Pancreas (tissue), 10 donors: ENCODE measurements at regions of chr18 and their contacts with region 1.

Region 1: DNA sequence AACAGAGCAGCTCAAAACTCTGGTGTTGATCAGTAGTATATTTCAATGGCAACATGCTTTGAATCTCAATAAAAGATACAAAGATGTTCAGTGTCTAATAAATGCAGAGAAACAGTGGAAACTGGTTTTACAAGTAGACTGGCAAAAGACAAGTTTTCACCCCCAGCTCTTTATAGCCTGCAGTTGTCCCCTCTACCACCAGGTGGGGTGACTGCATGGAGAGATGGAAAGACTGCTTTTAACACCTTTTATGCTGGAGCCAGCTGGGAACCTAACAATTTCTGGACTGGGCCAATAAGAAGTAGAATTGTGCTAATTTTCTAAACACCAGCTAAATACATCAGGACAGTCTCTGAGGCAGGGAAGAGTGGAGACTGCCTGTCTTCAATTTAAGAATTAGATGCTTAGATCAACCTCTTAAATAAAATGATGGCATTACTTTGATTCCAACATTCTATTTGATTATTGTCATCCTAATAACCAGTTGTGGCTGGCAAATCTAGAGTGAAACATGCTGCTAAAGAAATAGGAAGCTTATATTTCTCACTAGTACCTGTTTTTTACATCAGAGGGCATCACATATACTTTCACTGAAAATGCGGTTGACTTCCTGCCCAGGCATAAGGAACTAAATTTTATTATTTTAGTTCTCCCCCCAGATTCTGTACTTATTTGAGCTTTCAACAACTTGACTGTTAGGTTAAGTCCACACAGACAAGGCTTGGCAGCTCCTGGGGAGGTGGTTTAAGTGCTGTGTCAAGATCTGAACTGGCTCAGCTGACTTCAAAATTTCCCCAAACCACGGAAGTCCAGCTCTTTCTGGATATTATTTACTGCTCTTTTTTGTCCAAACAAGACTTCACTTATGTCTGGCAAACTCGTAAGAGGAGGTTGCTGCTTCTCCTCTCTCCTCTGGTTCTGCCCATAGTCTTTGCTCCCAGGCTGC is 140.5 kb downstream of the TPGS2 start:
- DNase-seq: peak in 5 of 6 donors; percentile 30 to 74 (median 59)
- ATAC-seq: peak; percentile 56 to 94 (median 90)
- H3K4me3 ChIP-seq: no peak overlapping the region
- H3K27ac ChIP-seq: no peak overlapping the region
- H3K4me1 ChIP-seq: no peaks in the 10 kb centered on the region
- H3K27me3 ChIP-seq: no peaks in the 10 kb centered on the region
- CTCF ChIP-seq: peak; percentile 65 to 85 (median 78)

Region 2: DNA sequence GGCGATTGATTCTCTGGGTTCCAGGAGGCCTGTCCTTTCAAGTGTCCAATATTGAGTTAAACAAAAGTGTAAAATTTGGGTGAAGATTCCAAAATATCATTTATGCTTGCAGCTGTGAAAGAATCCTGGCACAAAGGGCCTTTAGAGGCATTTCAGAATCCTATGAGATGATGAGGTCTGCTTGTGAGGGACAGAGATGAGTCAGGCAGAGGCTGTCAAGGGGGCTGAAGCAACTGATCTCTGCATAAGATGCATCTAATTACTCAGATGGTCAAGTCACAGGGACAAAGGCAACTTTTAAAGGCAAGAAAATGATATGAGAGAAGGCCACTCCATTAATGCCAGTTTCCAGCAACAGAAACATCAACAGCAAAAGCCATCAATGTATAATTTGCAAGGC is 311.9 kb before region 1 on chr18:
- intact Hi-C with region 1: no loop called
- DNase-seq: no peak
- ATAC-seq: no peak
- H3K4me3 ChIP-seq: no peak overlapping the region
- H3K27ac ChIP-seq: no peak overlapping the region
- H3K4me1 ChIP-seq: no peaks in the 10 kb centered on the region
- H3K27me3 ChIP-seq: no peaks in the 10 kb centered on the region
- CTCF ChIP-seq: no peak

Region 3: DNA sequence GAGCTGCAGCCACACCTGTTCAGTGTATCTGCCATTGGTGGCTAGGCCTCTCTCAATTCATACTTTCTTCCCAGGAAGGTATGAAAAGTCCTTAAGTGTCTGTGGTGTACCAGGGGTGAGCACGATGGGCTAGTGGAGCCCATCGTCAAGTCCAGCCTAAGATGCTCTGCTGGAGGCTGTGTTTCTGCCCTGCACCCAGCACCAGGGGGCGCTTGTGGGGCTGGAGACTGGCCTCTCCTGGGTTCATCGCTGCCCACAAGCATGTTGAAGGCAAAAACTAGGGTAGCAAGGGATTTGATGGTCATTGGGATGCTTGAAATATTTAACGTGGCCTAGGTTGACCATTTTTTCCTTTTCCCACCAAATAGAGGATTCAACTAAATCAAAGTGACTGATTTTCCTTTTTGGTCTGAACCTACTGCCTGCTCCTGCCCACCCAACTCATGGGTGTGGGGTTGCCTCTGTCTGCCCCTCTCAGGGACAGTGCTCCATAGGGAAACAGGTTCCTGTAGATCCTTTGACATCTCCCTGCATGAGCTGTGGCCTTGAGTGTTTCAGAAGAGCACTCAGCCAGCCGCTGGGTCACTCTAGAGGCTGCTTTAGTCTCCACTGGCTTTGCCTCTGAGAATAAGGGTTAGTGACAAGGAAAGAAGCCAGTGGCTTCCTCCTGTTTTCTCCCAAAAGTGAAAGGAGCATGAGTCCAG is 81.5 kb after region 1 on chr18:
- intact Hi-C with region 1: loop called in 1 of 3 experiments (anchors 10 kb)
- DNase-seq: peak in 2 of 6 donors; percentile 47 to 76
- ATAC-seq: peak in 3 of 4 donors; percentile 51 to 59 (median 58)
- H3K4me3 ChIP-seq: no peak overlapping the region
- H3K27ac ChIP-seq: no peak overlapping the region
- H3K4me1 ChIP-seq: no peaks in the 10 kb centered on the region
- H3K27me3 ChIP-seq: no peaks in the 10 kb centered on the region
- CTCF ChIP-seq: peak in 3 of 4 donors; percentile 7 to 25 (median 8)

Region 4: DNA sequence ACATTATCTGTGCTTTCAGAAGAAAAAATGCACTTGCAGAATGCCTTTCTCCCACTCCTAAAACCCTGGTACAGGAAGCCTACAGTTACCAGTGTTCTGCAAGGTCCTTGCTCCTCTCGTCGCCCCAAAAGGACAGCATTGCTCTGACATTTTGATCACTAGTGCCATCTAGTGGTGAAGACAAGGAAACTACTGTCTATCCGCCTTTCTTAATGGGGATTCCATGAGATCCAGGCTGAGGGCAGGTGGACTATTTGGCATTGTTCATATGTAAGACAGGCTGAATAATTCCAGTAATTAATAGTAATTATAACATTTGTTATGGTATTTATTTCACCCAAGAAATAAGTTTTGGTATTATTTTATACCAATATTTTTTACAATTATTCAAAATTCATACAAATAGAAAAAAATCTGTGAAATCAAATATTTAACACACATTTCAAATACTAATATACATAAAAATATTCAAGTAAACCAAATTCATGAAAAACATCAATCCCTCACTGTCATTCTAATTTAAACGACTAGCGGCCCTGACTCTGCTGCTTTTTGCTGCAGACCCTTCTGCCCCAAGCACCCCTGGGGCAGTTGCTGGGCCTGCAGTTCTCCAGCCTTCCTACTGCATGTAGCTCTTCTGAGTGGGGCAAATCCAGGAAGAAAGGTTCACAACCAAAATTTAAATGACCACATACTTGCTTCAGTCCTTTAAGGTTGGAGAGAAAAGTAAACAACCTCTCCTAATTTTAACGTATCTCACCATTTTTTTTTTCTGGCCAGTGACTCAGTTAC is 121.5 kb after region 1 on chr18:
- intact Hi-C with region 1: loop called in 1 of 3 experiments (anchors 5 kb)
- DNase-seq: peak in 3 of 6 donors; percentile 7 to 34 (median 22)
- ATAC-seq: peak; percentile 85 to 99 (median 92)
- H3K4me3 ChIP-seq: no peak overlapping the region
- H3K27ac ChIP-seq: no peak overlapping the region
- H3K4me1 ChIP-seq: peaks cover under 1 to 4% (median 3%) of the 10 kb centered on the region in 3 donors
- H3K27me3 ChIP-seq: no peaks in the 10 kb centered on the region
- CTCF ChIP-seq: peak; percentile 44 to 88 (median 72)